ENCODE measurements at regions of chr12 and their contacts with region 1.

Region 1: DNA sequence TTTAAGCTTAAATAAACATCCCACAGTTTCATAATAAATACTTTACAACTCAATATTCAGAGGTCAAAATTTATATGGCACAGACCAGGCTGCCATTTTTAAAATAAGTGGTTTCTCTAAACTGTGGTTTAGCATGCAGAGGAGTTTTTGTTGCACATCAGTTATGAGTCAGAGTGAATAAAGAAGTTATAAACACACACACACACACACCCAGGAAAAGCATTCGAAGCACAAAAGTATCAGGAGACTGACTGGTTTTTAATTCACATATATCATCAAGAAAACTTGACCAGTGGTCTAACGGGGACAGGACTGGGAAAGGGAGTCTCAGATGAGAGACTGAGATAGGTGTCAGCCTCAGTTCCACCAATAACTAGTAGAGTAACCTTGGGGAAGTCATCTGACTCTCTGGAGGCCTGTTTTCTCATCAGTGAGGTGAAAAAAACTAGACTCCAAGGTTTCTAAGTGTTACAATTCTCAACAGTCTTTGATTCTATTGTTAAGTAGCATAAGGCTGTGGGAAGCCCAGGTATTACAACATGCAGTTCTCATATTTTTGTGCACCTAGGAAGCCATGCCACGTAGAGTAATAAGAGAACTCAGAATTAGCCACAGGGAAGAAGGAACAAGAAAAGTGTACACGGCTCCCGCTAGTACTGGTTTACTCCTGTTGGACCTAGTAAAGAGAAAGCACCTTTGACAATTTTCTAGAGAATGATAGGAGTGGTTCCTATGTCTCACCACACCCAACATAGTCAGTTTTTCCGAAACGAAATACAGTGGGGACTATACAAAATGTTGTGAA is 5.2 kb downstream of the PPTC7 start:
- DNase-seq: peak; percentile 71
- ATAC-seq: peak; percentile 57
- H3K4me3 Mint-ChIP-seq: peak overlapping the region; percentile 66
- H3K27ac Mint-ChIP-seq: peak overlapping the region; percentile 98
- H3K4me1 Mint-ChIP-seq: peaks cover 66% of the 10 kb centered on the region
- H3K27me3 Mint-ChIP-seq: no peaks in the 10 kb centered on the region

Region 2: DNA sequence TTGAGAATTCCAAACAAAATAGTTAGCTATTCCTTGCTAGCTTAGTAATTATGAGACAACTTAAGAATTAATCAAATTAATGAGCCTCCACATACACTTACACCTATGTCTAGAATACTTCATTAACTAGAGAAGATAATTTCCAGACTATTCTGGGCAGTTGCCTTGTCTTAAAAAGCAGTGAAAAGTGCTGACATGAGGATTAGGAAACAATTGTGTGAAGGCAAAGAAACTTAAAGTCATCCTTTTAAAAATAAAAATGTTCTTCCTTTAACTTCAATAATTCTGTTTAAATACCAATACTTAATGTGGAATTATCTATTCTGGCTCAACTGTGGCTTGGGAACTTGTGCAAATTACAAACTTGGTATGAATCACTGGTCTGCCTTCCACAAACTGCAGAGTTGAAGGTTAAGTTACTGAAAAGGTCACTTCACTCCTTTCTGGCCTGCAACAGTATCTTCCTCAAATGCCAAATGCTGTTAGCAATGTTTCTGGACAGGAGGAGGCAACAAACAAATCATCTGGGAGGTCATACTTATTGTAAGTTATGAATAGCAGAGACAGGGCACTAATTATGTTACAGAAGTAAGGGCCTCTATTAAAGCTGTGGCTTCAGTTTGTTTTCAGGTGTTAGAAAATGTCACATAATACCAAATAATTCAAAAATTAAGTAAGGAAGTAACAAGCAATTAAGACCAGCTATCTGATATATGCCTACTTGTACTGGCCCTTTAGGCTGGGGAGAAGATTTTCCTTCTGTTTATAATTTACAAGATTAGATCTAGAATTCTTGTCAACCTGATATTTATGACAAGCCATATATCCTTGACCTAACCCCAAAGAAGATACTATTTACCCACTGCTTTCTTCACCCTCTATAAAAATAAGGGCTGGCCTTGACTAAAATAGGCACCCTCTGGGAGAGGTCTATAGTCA is 13.9 kb before region 1 on chr12:
- CTCF ChIA-PET with region 1: interaction called, 21 read pairs
- DNase-seq: no peak
- ATAC-seq: no peak
- H3K4me3 Mint-ChIP-seq: no peak overlapping the region
- H3K27ac Mint-ChIP-seq: peak overlapping the region; percentile 40
- H3K4me1 Mint-ChIP-seq: peaks cover 41% of the 10 kb centered on the region
- H3K27me3 Mint-ChIP-seq: no peaks in the 10 kb centered on the region